HepG2 (cell line): ENCODE measurements at regions of chr17 and their contacts with region 1.

Region 1: DNA sequence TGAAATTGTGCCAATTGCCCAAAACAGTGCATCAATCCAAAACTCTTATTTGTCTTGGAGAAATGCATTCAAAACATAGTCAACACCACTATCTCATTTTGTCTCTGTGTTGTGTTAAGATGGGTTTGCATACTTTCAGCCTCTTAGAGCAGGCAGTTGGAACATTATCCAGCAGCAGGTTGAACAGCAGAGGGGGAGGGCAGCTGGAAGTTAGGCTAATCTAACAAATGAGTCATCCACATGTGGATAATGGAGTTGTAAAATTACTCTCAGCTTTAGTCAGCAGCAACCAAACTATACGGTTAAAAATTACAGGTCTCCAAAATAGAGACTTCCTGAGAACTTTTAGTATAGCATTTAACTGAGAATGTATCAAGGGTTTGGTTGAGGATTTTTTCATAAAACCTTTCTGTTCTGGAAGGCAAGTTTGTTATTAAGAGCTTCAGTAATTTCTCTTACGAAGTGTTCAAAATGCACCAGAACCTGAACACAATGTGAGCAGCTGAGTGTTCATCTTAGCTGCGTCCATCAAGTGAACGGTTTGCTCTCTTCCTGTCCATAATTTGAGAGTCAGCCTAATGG is 46.3 kb downstream of the PRKCA start:
- DNase-seq: peak; percentile 68
- ATAC-seq: peak; percentile 77
- H3K4me3 ChIP-seq: no peak overlapping the region
- H3K27ac ChIP-seq: peak overlapping the region; percentile 27
- H3K4me1 ChIP-seq: peaks cover 79% of the 10 kb centered on the region
- H3K27me3 ChIP-seq: no peaks in the 10 kb centered on the region
- CTCF ChIP-seq: no peak
- EP300 ChIP-seq: peak in 1 of 2 experiments; percentile 32; a peak in 2 of 4 replicates
- POLR2A ChIP-seq: no peak
- RAD21 ChIP-seq: no peak

Region 2: DNA sequence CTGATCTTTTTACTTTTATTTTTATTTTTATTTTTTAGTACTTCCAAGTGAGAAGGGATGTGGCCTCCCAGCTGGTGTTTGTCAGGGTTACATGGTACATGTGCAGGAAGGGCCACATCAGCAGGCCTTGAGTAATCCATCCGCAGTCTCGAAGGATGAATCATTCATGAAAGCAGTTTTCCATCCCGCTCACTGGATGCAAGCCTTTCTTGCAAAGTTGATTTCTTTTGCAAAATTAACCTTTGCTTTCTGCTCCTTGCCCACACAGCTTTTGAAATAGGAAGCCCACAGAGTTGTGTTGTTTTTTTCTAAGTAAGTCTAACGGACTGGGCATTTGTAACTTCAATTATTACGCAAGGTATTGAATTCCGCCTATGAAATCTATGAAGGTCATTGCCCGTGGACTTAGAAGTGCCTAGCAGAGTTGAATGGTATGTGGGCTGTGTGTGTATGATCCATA is 111.2 kb after region 1 on chr17:
- CTCF ChIA-PET with region 1: no interaction called
- POLR2A ChIA-PET with region 1: no interaction called
- in situ Hi-C with region 1: no loop called
- intact Hi-C with region 1: loop called (anchors 10 kb)
- DNase-seq: peak; percentile 95
- ATAC-seq: peak; percentile 94
- H3K4me3 ChIP-seq: peak overlapping the region; percentile 19 to 27 (median 27); a peak in 3 of 6 replicates
- H3K27ac ChIP-seq: peak overlapping the region; percentile 89
- H3K4me1 ChIP-seq: peaks cover 50% of the 10 kb centered on the region
- H3K27me3 ChIP-seq: no peaks in the 10 kb centered on the region
- CTCF ChIP-seq: no peak
- EP300 ChIP-seq: peak; percentile 56 to 91; a peak in 2 of 4 replicates
- POLR2A ChIP-seq: 0 out of 4 replicates have a peak, but pooled peaks of 1 of the 2 experiments have one; percentile 40
- RAD21 ChIP-seq: no peak